Dorsolateral prefrontal cortex (tissue), 120 donors: ENCODE measurements at regions of chr16 and their contacts with region 1.

Region 1: GRCh38 chr16:86531191-86531545 is 20.8 kb downstream of the FOXF1 start:
- DNase-seq: peak; percentile 50 to 90 (median 85)
- H3K4me3 ChIP-seq: peak overlapping the region in 9 of 59 donors; percentile 3 to 35 (median 10)
- H3K27ac ChIP-seq: peak overlapping the region in 49 of 59 donors; percentile 6 to 81 (median 66)
- H3K27me3 ChIP-seq: no peaks in the 10 kb centered on the region
- CTCF ChIP-seq: peak in 4 of 56 donors; percentile 5 to 17 (median 14)

Region 2: DNA sequence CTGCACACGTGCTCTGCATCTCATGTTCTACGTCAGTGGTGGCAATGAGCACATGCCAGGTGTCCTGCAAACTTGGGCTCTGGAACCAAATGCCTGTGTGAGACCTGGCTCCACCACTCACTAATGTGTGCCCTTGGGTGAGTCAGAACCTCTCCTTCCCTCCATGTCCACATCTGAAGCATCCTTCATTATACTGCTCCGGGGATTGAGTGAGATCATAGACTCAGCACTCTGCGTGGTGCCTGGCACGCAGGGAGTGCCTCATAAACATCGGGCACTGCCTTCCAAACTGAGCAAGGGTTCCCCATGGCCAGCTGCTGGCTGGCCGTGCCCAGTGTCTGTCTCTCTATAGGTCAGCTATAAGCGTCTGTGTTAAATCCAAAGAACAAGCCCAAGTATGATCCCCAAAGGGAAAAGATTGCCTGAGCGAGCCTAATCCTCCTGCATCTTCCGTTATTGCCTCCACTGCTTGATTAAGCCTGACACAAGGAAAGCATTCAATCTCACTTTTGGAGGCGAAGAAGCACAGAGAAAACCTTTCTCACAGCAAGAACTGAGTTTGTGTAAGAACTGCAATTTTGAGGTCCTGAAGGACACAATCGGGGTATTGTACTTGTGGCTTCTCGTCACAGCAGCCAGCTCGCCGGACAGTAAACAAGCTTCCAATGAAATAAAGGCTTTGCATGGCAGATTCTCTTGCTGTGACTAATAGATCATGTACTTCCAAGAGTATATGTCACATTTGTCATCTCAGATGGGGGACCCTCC is 39.7 kb before region 1 on chr16:
- intact Hi-C with region 1: loop called in 1 of 2 experiments (anchors 2 kb)
- DNase-seq: peak in 2 of 10 donors; percentile 49 to 62
- H3K4me3 ChIP-seq: peak overlapping the region in 12 of 59 donors; percentile 10 to 42 (median 24)
- H3K27ac ChIP-seq: peak overlapping the region; percentile 9 to 97 (median 87)
- H3K27me3 ChIP-seq: peaks cover 9 to 95% (median 61%) of the 10 kb centered on the region in 45 donors
- CTCF ChIP-seq: no peak